Posterior vena cava (tissue), 2 donors: ENCODE measurements at regions of chr13 and their contacts with region 1.

Region 1: GRCh38 chr13:49300739-49301589 is 53.2 kb downstream of the CDADC1 start:
- DNase-seq: no peak

Region 2: GRCh38 chr13:49436890-49437289 is 135.9 kb after region 1 on chr13:
- intact Hi-C with region 1: loop called (anchors 2 kb)
- DNase-seq: peak; percentile 83

Region 3: GRCh38 chr13:49606747-49607648 is 306.0 kb after region 1 on chr13:
- intact Hi-C with region 1: loop called (anchors 5 to 10 kb)
- DNase-seq: peak; percentile 96